ENCODE measurements at regions of chr3 and their contacts with region 1.

Region 1: DNA sequence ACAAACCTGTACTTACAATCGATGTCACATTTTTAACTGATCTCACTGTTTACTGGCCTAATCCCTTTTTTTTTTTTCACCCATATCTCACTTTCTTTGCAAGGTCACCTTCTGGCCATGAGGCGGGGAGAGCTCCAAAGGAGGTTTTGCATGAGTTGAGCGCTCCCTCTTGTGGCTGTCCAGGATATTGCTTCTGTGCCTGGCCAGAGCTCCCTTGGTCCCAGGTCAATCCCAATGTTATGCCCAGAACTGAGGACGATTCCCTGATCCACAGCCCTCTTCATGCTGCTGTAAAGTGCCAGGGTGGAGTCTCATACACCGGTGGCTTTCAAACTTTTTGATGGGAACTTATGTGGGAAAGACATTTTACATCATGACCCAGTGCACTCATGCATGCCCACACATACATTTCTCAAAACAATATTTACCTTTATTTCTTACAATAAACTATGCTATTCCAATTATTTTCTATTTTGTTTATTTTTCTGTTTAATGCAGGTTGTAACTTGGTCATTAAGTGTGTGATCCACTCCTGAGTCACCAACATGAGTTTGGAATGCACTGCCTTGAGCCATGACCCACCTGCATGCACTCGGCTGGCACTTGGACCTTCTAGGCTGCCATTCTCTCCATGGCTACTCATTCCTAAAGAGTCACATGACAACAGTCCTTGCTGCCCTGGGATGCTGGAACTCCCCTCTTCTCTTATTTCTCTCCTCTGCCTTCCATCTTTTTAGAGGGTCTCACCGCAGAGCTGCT is 9.6 kb upstream of the SST start:
- DNase-seq: peak; percentile 92
- ATAC-seq: peak; percentile 91
- H3K4me3 Mint-ChIP-seq: no peak overlapping the region
- H3K27ac Mint-ChIP-seq: 0 out of 2 replicates have a peak overlapping the region, but pooled peaks have one; percentile 15
- H3K4me1 Mint-ChIP-seq: peaks cover 20% of the 10 kb centered on the region
- H3K27me3 Mint-ChIP-seq: peaks cover 39% of the 10 kb centered on the region
- CTCF ChIP-seq: peak; percentile 93

Region 2: DNA sequence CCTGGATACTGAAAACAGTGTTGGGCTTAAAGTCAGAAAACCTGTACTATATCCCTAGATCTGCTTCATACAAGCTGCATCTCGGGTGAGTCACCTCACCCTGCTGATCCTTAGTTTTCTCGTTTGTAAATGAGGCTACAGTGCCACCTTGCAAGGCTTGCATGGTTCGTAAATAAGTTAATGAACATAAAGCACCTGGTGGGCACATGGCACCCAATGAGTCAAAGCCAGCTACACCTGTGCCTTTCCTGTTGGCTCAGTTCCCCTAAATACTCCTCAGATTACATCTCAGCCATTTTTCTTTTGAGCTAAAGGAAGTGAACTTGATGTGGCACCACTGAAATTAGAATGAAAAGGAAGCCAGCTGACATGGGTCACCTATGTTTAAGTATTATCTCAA is 456.0 kb before region 1 on chr3:
- CTCF ChIA-PET with region 1: interaction called, 68 read pairs
- POLR2A ChIA-PET with region 1: interaction called, 4 read pairs
- DNase-seq: no peak
- ATAC-seq: no peak
- H3K4me3 Mint-ChIP-seq: no peak overlapping the region
- H3K27ac Mint-ChIP-seq: no peak overlapping the region
- H3K4me1 Mint-ChIP-seq: peaks cover 15% of the 10 kb centered on the region
- H3K27me3 Mint-ChIP-seq: peaks cover 4% of the 10 kb centered on the region; the same call in 1 of the 2 replicates
- CTCF ChIP-seq: no peak

Region 3: DNA sequence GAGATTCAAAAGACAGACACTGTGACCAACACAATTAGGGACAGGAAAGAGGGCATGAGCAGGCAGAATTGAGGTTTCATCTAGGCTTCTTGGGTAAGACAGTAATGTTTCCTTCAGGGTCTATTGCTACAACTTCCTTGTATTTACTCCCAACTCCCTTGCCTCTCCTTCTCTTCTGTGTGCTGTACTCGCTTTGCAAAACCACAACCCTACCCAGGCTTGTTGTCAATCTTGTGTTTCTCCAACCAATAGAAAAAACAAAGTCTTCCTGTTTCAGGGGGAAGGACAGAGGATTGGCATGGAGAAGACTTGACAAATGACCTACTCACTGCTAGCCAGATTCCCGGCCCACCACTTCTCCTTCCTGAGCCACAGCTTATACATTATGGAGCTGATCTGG is 352.0 kb before region 1 on chr3:
- CTCF ChIA-PET with region 1: interaction called, 433 read pairs
- POLR2A ChIA-PET with region 1: interaction called, 13 read pairs
- DNase-seq: no peak
- ATAC-seq: no peak
- H3K4me3 Mint-ChIP-seq: no peak overlapping the region
- H3K27ac Mint-ChIP-seq: no peak overlapping the region
- H3K4me1 Mint-ChIP-seq: peaks cover 4% of the 10 kb centered on the region; the same call in 1 of the 2 replicates
- H3K27me3 Mint-ChIP-seq: peaks cover 3% of the 10 kb centered on the region; the same call in 1 of the 2 replicates
- CTCF ChIP-seq: no peak

Region 4: GRCh38 chr3:187593332-187593850 is 86.4 kb before region 1 on chr3:
- CTCF ChIA-PET with region 1: interaction called, 14 read pairs
- POLR2A ChIA-PET with region 1: no interaction called
- DNase-seq: no peak
- ATAC-seq: no peak
- H3K4me3 Mint-ChIP-seq: no peak overlapping the region
- H3K27ac Mint-ChIP-seq: no peak overlapping the region
- H3K4me1 Mint-ChIP-seq: peaks cover 43% of the 10 kb centered on the region
- H3K27me3 Mint-ChIP-seq: peaks cover 5% of the 10 kb centered on the region
- CTCF ChIP-seq: no peak

Region 5: GRCh38 chr3:187702507-187703033 is 22.8 kb after region 1 on chr3 and contains the start of gene RTP2:
- CTCF ChIA-PET with region 1: interaction called, 11 read pairs
- POLR2A ChIA-PET with region 1: no interaction called
- DNase-seq: no peak
- ATAC-seq: no peak
- H3K4me3 Mint-ChIP-seq: no peak within 1 kb of the TSS
- H3K27ac Mint-ChIP-seq: no peak within 1 kb of the TSS
- H3K4me1 Mint-ChIP-seq: no peaks in the 10 kb centered on the region
- H3K27me3 Mint-ChIP-seq: no peaks in the 10 kb centered on the region
- CTCF ChIP-seq: no peak
- total RNA-seq, gene RTP2: not detected in 3 replicates

Region 6: GRCh38 chr3:187714404-187714979 is 34.7 kb after region 1 on chr3:
- CTCF ChIA-PET with region 1: interaction called, 25 read pairs
- POLR2A ChIA-PET with region 1: no interaction called
- DNase-seq: peak; percentile 81
- ATAC-seq: peak; percentile 94
- H3K4me3 Mint-ChIP-seq: no peak overlapping the region
- H3K27ac Mint-ChIP-seq: no peak overlapping the region
- H3K4me1 Mint-ChIP-seq: peaks cover 10% of the 10 kb centered on the region
- H3K27me3 Mint-ChIP-seq: peaks cover 9% of the 10 kb centered on the region; the same call in 1 of the 2 replicates
- CTCF ChIP-seq: peak; percentile 93